HepG2 (cell line): ENCODE measurements at regions of chr1 and their contacts with region 1.

Region 1: GRCh38 chr1:99348397-99349132 is 84.3 kb downstream of the PLPPR4 start:
- DNase-seq: no peak
- ATAC-seq: no peak
- H3K4me3 ChIP-seq: no peak overlapping the region
- H3K27ac ChIP-seq: no peak overlapping the region
- H3K4me1 ChIP-seq: no peaks in the 10 kb centered on the region
- H3K27me3 ChIP-seq: no peaks in the 10 kb centered on the region
- CTCF ChIP-seq: no peak
- EP300 ChIP-seq: no peak
- POLR2A ChIP-seq: no peak
- RAD21 ChIP-seq: no peak

Region 2: GRCh38 chr1:99119188-99119587 is 229.4 kb before region 1 on chr1:
- CTCF ChIA-PET with region 1: no interaction called
- POLR2A ChIA-PET with region 1: no interaction called
- in situ Hi-C with region 1: no loop called
- intact Hi-C with region 1: no loop called
- DNase-seq: no peak
- ATAC-seq: no peak
- H3K4me3 ChIP-seq: no peak overlapping the region
- H3K27ac ChIP-seq: no peak overlapping the region
- H3K4me1 ChIP-seq: no peaks in the 10 kb centered on the region
- H3K27me3 ChIP-seq: no peaks in the 10 kb centered on the region
- CTCF ChIP-seq: no peak
- EP300 ChIP-seq: no peak
- POLR2A ChIP-seq: no peak
- RAD21 ChIP-seq: no peak

Region 3: DNA sequence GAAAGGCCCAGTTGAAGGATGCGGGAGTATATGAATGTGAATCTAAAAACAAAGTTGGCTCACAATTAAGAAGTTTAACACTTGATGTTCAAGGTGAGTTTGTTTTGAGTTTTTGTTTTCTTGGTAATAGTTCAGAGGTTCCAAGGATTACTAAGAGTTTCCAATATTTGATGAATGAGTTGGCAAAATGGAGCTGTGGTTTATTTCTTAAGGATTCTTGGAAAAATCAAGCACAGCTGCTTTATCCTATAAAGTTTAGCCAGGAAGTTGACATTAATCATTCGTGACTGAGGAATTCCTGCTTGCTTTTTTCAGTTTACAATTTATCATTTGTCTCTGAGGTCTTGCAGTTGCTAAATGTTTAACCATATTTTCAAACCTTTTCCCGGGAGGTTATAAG is 1386.1 kb after region 1 on chr1:
- CTCF ChIA-PET with region 1: no interaction called
- POLR2A ChIA-PET with region 1: no interaction called
- in situ Hi-C with region 1: no loop called
- intact Hi-C with region 1: loop called (anchors 5 kb)
- DNase-seq: no peak
- ATAC-seq: no peak
- H3K4me3 ChIP-seq: no peak overlapping the region
- H3K27ac ChIP-seq: no peak overlapping the region
- H3K4me1 ChIP-seq: peaks cover 29% of the 10 kb centered on the region
- H3K27me3 ChIP-seq: no peaks in the 10 kb centered on the region
- CTCF ChIP-seq: no peak
- EP300 ChIP-seq: no peak
- POLR2A ChIP-seq: no peak
- RAD21 ChIP-seq: no peak